Activated CD8-positive, alpha-beta T cell treated with anti-CD3 and anti-CD28 coated beads, Interleukin-2, amount 10 ng/mL, durations not matched to agents 7 days and 5 days (primary cell): ENCODE measurements at regions of chr6 and their contacts with region 1.

Region 1: DNA sequence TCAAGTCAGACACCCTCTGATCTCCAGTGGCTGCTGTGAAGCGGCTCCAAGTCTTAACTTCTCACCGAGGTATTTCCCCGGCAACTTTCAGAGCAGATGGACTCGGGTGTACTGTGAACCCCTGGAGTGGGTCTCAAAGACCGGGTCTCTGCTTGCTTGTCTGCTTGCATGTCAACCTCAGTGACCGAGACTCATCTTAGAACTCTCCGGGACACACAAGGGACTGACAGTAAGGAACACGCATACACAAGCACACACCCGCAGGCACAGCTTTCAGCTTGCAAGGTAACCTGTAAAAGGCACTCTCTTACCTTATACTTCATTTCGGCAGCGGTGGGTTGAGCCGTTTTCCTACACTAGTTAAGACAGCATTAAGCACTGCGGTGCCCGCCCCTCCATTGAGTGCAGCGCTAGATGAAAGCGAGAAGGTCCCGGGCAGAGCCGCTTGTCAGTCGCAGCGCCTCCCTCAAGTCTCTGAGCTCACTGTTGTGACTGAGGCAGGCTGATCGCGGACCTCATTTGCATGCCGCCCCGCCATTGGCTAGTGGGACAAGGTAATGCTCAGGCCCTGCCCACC is at the start of gene NEDD9:
- DNase-seq: peak; percentile 98
- ATAC-seq: peak; percentile 98
- H3K4me3 Mint-ChIP-seq: peak within 1 kb of the TSS; percentile 95
- H3K27ac Mint-ChIP-seq: peak within 1 kb of the TSS; percentile 93
- H3K4me1 Mint-ChIP-seq: peaks cover 74% of the 10 kb centered on the region
- H3K27me3 Mint-ChIP-seq: no peaks in the 10 kb centered on the region
- total RNA-seq, gene NEDD9: 64.9 to 69.5 TPM

Region 2: GRCh38 chr6:10276106-10276505 is 956.2 kb before region 1 on chr6:
- CTCF ChIA-PET with region 1: no interaction called
- POLR2A ChIA-PET with region 1: no interaction called
- DNase-seq: no peak
- ATAC-seq: no peak
- H3K4me3 Mint-ChIP-seq: no peak overlapping the region
- H3K27ac Mint-ChIP-seq: no peak overlapping the region
- H3K4me1 Mint-ChIP-seq: no peaks in the 10 kb centered on the region
- H3K27me3 Mint-ChIP-seq: no peaks in the 10 kb centered on the region

Region 3: GRCh38 chr6:11101417-11101816 is 130.9 kb before region 1 on chr6:
- CTCF ChIA-PET with region 1: no interaction called
- POLR2A ChIA-PET with region 1: no interaction called
- DNase-seq: no peak
- ATAC-seq: no peak
- H3K4me3 Mint-ChIP-seq: no peak overlapping the region
- H3K27ac Mint-ChIP-seq: no peak overlapping the region
- H3K4me1 Mint-ChIP-seq: peaks cover 23% of the 10 kb centered on the region
- H3K27me3 Mint-ChIP-seq: no peaks in the 10 kb centered on the region

Region 4: GRCh38 chr6:11133281-11133680 is 99.0 kb before region 1 on chr6:
- CTCF ChIA-PET with region 1: no interaction called
- POLR2A ChIA-PET with region 1: no interaction called
- DNase-seq: no peak
- ATAC-seq: no peak
- H3K4me3 Mint-ChIP-seq: no peak overlapping the region
- H3K27ac Mint-ChIP-seq: no peak overlapping the region
- H3K4me1 Mint-ChIP-seq: no peaks in the 10 kb centered on the region
- H3K27me3 Mint-ChIP-seq: no peaks in the 10 kb centered on the region

Region 5: GRCh38 chr6:11194356-11195218 is 37.7 kb before region 1 on chr6:
- CTCF ChIA-PET with region 1: interaction called, 6 read pairs
- POLR2A ChIA-PET with region 1: interaction called, 17 read pairs
- DNase-seq: no peak
- ATAC-seq: no peak
- H3K4me3 Mint-ChIP-seq: no peak overlapping the region
- H3K27ac Mint-ChIP-seq: no peak overlapping the region
- H3K4me1 Mint-ChIP-seq: peaks cover 52% of the 10 kb centered on the region
- H3K27me3 Mint-ChIP-seq: no peaks in the 10 kb centered on the region

Region 6: GRCh38 chr6:11207199-11207968 is 24.9 kb before region 1 on chr6:
- CTCF ChIA-PET with region 1: interaction called, 8 read pairs
- POLR2A ChIA-PET with region 1: interaction called, 28 read pairs
- DNase-seq: no peak
- ATAC-seq: no peak
- H3K4me3 Mint-ChIP-seq: no peak overlapping the region
- H3K27ac Mint-ChIP-seq: no peak overlapping the region
- H3K4me1 Mint-ChIP-seq: peaks cover 91% of the 10 kb centered on the region
- H3K27me3 Mint-ChIP-seq: no peaks in the 10 kb centered on the region

Region 7: DNA sequence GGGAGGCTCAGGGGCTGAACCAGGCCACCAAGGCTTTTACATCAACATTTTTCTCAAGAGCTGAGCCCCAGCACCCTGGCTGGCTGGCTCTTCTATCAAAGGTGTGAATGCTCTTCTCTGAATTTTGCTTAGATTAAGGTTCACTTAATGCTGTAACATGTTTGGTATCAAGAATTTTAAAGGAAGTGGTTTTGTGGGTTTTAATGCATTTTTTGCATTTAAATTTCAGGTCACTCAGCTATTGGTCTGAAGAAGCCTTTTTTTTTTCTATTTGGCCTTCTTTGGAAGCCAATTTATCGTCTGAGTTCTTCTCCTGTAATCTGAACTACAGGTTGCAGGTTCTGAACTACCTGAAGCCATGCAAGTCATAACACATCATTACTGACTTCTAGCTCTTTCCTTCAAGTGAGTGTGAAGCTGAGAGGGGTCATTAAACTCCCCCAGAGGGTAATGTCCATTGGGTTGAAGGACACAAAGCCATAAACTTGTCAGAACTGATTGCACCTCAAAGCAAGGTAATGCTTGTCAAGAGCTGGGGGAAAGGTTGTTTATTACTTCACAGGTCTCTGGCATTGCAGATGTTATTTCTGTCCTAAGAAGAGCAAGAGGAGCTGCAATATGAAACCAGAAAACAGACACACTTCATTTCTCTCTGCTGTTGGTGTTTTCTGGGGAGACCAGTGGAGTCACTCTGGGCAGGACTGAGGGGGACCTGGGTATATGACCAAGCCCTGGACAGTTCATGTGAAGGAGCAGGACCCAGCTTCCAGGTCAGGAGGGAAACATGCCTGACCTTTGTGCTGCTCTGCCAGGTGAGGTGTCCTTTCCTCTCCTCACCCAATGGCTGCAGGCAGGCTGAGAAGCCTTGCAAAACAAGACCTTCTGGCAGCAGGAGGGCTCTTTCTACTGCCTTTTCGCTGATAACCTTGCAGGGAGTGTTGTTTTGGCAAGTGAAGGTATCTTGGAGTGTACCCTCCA is 26.3 kb after region 1 on chr6:
- CTCF ChIA-PET with region 1: interaction called, 5 read pairs
- POLR2A ChIA-PET with region 1: interaction called, 36 read pairs
- DNase-seq: peak; percentile 72
- ATAC-seq: peak; percentile 92
- H3K4me3 Mint-ChIP-seq: peak overlapping the region; percentile 43
- H3K27ac Mint-ChIP-seq: peak overlapping the region; percentile 86
- H3K4me1 Mint-ChIP-seq: peaks cover 66% of the 10 kb centered on the region
- H3K27me3 Mint-ChIP-seq: no peaks in the 10 kb centered on the region

Region 8: GRCh38 chr6:11268978-11269377 is 36.7 kb after region 1 on chr6:
- CTCF ChIA-PET with region 1: no interaction called
- POLR2A ChIA-PET with region 1: no interaction called
- DNase-seq: no peak
- ATAC-seq: no peak
- H3K4me3 Mint-ChIP-seq: no peak overlapping the region
- H3K27ac Mint-ChIP-seq: no peak overlapping the region
- H3K4me1 Mint-ChIP-seq: peaks cover 10% of the 10 kb centered on the region
- H3K27me3 Mint-ChIP-seq: no peaks in the 10 kb centered on the region

Region 9: GRCh38 chr6:11353921-11354389 is 121.7 kb after region 1 on chr6:
- CTCF ChIA-PET with region 1: interaction called, 3 read pairs
- POLR2A ChIA-PET with region 1: interaction called, 10 read pairs
- DNase-seq: peak; percentile 72
- ATAC-seq: peak; percentile 81
- H3K4me3 Mint-ChIP-seq: peak overlapping the region; percentile 15
- H3K27ac Mint-ChIP-seq: peak overlapping the region; percentile 82
- H3K4me1 Mint-ChIP-seq: peaks cover 49% of the 10 kb centered on the region
- H3K27me3 Mint-ChIP-seq: no peaks in the 10 kb centered on the region

Region 10: DNA sequence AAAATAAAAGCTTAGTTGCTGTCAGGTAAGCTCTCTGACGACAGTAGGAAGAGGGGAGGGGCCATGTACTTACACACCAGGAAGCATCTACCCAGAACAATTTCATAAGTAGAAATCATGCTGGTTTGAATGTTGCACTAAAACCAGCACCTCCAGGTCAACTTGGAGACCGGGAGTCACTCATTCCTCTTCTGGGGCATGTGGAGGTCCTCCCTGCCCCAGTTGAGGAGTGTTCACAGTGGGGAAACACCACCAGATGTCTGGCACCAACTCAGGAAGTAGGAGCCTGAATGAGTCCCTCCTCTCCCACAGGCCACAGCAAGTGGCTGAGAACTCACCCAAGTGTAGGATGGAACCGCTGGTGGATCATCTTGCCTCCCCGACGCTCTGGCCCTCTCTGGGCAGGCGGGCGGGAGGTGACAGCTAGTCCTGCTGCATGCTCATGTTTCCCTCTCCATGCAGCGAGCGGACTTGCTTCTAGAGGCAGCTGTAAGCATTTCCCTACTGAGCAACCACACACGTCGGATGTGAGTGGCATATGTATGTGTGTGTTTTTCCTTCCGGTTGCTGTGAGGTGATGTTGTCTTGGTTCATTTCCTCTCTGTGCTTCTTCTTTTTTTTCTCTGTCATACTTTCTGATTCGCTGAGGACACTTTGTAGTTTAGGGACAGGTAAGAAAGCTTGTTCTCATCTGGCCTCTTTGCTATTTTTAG is 149.7 kb after region 1 on chr6:
- CTCF ChIA-PET with region 1: interaction called, 3 read pairs
- POLR2A ChIA-PET with region 1: interaction called, 27 read pairs
- DNase-seq: peak; percentile 87
- ATAC-seq: peak; percentile 95
- H3K4me3 Mint-ChIP-seq: peak overlapping the region; percentile 91
- H3K27ac Mint-ChIP-seq: peak overlapping the region; percentile 96
- H3K4me1 Mint-ChIP-seq: peaks cover 53% of the 10 kb centered on the region
- H3K27me3 Mint-ChIP-seq: peaks cover 2% of the 10 kb centered on the region